Adrenal gland (tissue), 19 donors: ENCODE measurements at regions of chr12 and their contacts with region 1.

Region 1: GRCh38 chr12:111396726-111397445 is 8.8 kb upstream of the SH2B3 start:
- DNase-seq: peak; percentile 77 to 90 (median 87)
- H3K4me3 ChIP-seq: peak overlapping the region in 1 of 4 donors; percentile 46
- H3K27ac ChIP-seq: peak overlapping the region in 3 of 5 donors; percentile 35 to 74 (median 52)
- H3K4me1 ChIP-seq: peaks cover 0 to 6% of the 10 kb centered on the region in 2 donors
- H3K27me3 ChIP-seq: no peaks in the 10 kb centered on the region
- CTCF ChIP-seq: peak; percentile 98 to 99 (median 99)
- POLR2A ChIP-seq: no peak

Region 2: DNA sequence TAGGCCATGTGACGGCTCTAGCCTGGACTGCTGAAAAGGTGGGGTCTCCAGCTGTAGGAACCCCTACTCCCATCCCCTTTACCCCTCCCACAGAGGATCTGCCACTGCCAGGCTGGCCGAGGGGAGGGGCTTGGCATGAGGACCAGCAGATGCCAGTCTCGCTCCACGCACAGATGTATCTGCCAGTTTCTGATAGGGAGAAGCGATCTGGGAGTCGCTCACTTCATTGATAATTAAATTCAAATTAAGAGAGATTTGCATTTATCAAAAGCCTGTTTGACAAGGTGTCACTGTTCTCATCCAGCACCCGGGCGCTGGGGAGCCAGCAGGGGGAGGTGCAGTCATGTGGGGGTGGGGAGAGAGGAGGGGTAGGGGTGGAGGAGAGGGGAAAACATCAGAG is 258.9 kb before region 1 on chr12:
- intact Hi-C with region 1: no loop called
- DNase-seq: no peak
- H3K4me3 ChIP-seq: no peak overlapping the region
- H3K27ac ChIP-seq: no peak overlapping the region
- H3K4me1 ChIP-seq: no peaks in the 10 kb centered on the region
- H3K27me3 ChIP-seq: no peaks in the 10 kb centered on the region
- CTCF ChIP-seq: no peak
- POLR2A ChIP-seq: no peak

Region 3: DNA sequence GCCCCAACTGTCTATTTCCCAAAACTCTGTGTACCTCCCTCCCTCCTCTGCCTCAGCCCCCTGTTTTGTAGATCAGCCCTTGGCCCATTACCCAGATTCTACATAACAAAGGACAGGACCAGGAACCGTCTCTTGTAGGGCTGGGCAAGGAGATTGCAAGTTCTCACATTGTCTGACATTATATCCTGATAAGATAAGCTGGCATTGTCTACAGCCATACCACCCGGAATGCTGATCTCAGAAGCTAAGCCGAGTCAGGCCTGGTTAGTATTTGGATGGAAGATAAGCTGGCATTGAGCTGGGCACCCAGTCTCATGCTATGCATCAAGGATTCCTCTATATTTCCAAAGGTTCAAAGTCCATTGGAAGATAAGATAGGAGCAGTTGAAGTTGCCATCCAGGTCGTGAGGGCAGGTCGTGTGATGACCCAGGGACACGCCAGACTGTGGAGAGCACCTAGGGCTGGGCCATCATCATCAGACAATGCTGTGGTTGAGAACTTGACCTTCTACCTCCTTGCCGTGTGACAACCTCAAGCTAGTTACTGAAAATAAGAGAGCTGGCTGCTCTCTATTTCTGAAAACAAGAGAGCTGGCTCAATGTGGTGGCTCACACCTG is 57.5 kb before region 1 on chr12:
- intact Hi-C with region 1: loop called in 1 of 2 experiments (anchors 5 kb)
- DNase-seq: no peak
- H3K4me3 ChIP-seq: no peak overlapping the region
- H3K27ac ChIP-seq: no peak overlapping the region
- H3K4me1 ChIP-seq: no peaks in the 10 kb centered on the region
- H3K27me3 ChIP-seq: no peaks in the 10 kb centered on the region
- CTCF ChIP-seq: no peak
- POLR2A ChIP-seq: no peak

Region 4: GRCh38 chr12:111451649-111452129 is 54.8 kb after region 1 on chr12:
- intact Hi-C with region 1: loop called in 1 of 2 experiments (anchors 5 kb)
- DNase-seq: peak in 4 of 7 donors; percentile 10 to 53 (median 16)
- H3K4me3 ChIP-seq: no peak overlapping the region
- H3K27ac ChIP-seq: no peak overlapping the region
- H3K4me1 ChIP-seq: peaks cover 11 to 43% of the 10 kb centered on the region in 2 donors
- H3K27me3 ChIP-seq: no peaks in the 10 kb centered on the region
- CTCF ChIP-seq: peak; percentile 73 to 92 (median 82)
- POLR2A ChIP-seq: no peak

Region 5: DNA sequence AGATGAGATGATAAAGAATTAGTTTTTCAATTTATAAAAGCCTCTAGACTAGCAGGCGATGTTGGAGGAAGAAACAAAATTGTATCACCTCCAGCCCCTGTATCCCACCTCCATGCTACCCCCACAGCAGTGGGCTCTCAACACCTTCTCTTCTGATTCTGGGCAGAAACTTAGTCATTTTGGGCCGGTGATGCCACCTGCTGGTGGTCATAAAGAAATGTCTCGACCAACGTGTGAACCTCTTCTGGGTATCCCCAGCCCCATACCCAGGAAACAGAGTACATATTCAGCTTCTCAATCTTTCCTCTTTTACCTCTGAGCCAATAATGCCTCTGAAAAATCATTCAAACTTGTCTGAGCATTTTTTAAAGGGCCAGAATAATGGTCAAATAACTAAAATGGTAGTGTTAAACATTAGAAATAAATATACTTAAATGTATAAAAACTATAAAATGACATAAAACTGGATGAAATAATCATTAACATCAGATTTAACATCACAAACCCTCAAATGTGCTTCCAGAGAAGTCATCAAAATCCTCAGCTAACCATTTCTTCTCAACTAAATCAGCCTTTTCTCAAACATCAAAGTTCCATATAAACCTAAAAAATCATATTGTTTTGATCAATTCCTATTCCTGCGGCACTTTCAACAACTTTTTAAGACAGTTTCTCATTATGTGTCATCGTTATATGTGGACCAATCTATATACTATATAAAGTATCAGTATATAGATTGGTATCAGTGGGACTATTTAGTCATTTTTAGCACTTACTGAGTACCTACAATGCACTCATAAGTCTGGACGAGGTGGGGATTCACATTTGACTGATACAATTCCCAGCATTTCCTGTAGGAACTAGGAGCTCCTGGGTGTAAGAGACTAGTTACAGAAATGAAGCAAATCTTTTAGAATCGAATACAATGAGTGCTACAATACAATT is 132.8 kb after region 1 on chr12:
- intact Hi-C with region 1: loop called in 1 of 2 experiments (anchors 5 kb)
- DNase-seq: peak in 6 of 7 donors; percentile 30 to 60 (median 46)
- H3K4me3 ChIP-seq: no peak overlapping the region
- H3K27ac ChIP-seq: no peak overlapping the region
- H3K4me1 ChIP-seq: no peaks in the 10 kb centered on the region
- H3K27me3 ChIP-seq: no peaks in the 10 kb centered on the region
- CTCF ChIP-seq: peak; percentile 51 to 71 (median 63)
- POLR2A ChIP-seq: no peak

Region 6: DNA sequence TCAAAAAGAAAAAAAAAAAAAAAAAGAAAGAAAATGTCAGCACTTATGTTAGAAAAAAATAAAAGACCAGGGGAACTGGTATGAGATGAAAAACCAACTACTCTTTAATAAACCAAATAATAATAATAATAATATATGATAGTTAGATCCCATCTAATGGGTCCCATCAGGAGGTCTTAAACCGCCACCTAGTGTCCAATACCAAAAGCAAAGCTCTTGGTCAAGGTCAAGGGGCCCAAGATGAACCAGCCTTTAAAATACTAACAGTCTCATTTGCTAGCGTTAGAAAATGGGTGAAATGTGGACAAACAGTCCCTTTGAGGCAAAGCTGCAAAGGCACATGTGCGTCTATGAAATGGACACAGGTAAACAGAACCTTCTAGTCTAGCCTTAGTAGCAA is 276.6 kb after region 1 on chr12:
- intact Hi-C with region 1: loop called in 1 of 2 experiments (anchors 5 kb)
- DNase-seq: peak in 3 of 7 donors; percentile 24 to 38 (median 33)
- H3K4me3 ChIP-seq: no peak overlapping the region
- H3K27ac ChIP-seq: no peak overlapping the region
- H3K4me1 ChIP-seq: no peaks in the 10 kb centered on the region
- H3K27me3 ChIP-seq: no peaks in the 10 kb centered on the region
- CTCF ChIP-seq: peak; percentile 16 to 58 (median 40)
- POLR2A ChIP-seq: no peak